Uterus (tissue), 4 donors: ENCODE measurements at regions of chr4 and their contacts with region 1.

Region 1: DNA sequence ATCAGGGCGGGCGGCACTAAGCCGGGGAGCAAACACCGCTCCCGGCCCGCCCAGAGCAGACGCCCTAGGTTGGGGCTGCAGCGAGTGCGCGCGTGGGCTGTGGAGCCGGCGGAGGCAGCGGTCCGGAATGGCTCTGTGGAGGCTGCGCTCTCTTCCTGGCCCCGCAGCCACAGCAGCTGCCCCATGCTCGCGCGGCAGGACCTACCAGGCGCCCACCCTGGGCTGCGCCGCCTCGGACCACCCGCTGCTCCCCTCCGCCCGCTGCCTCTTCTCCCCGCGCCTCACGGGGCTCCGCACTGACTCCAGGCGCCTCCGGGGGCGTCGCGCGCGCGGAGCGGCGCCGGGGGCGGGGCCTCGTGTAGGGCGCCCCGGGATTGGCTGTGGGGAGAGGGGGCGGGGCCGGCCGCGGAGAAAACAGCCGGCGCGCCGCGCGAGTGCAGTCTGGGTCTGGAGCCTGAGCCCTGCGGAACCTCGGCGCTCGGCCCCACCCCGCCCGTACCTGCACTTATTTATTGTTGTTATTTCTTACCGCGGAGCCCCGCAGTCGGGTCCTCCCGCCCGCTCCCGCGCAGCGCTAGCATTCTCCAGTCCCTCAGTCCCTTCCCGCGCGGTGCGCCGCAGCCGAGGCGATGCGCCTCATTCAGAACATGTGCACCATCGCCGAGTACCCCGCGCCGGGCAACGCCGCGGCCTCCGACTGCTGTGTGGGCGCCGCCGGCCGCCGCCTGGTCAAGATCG is at the start of gene RASL11B:
- DNase-seq: peak; percentile 76 to 85
- H3K4me3 ChIP-seq: peak within 1 kb of the TSS; percentile 61 to 67
- H3K27ac ChIP-seq: peak within 1 kb of the TSS; percentile 40 to 65
- H3K4me1 ChIP-seq: no peaks in the 10 kb centered on the region
- H3K27me3 ChIP-seq: no peaks in the 10 kb centered on the region
- CTCF ChIP-seq: peak in 3 of 4 experiments; percentile 37 to 64 (median 60)
- POLR2A ChIP-seq: peak; percentile 78 to 96
- total RNA-seq, gene RASL11B: 0.29 to 36.4 (median 4.4) TPM

Region 2: GRCh38 chr4:52721968-52722815 is 139.9 kb before region 1 on chr4:
- intact Hi-C with region 1: loop called (anchors 10 kb)
- DNase-seq: peak; percentile 91 to 95
- H3K4me3 ChIP-seq: peak overlapping the region; percentile 79 to 97
- H3K27ac ChIP-seq: peak overlapping the region; percentile 89 to 95
- H3K4me1 ChIP-seq: no peaks in the 10 kb centered on the region
- H3K27me3 ChIP-seq: no peaks in the 10 kb centered on the region
- CTCF ChIP-seq: peak in 1 of 4 experiments; percentile 19
- POLR2A ChIP-seq: peak; percentile 27 to 63